ENCODE measurements at regions of chr22 and their contacts with region 1.

Region 1: GRCh38 chr22:50341977-50342650 is 1.0 kb upstream of the PPP6R2 start:
- DNase-seq: peak; percentile 78 to 92 (median 88)
- ATAC-seq: peak; percentile 49
- H3K4me3 ChIP-seq: peak overlapping the region; percentile 59 to 60
- H3K4me3 Mint-ChIP-seq: peak overlapping the region; percentile 84
- H3K27ac ChIP-seq: peak overlapping the region; percentile 62 to 77
- H3K27ac Mint-ChIP-seq: peak overlapping the region; percentile 92
- H3K4me1 ChIP-seq: peaks cover 23% of the 10 kb centered on the region
- H3K4me1 Mint-ChIP-seq: peaks cover 12% of the 10 kb centered on the region
- H3K27me3 ChIP-seq: peaks cover 0 to 8% of the 10 kb centered on the region in 2 experiments
- H3K27me3 Mint-ChIP-seq: no peaks in the 10 kb centered on the region
- CTCF ChIP-seq: peak; percentile 88

Region 2: DNA sequence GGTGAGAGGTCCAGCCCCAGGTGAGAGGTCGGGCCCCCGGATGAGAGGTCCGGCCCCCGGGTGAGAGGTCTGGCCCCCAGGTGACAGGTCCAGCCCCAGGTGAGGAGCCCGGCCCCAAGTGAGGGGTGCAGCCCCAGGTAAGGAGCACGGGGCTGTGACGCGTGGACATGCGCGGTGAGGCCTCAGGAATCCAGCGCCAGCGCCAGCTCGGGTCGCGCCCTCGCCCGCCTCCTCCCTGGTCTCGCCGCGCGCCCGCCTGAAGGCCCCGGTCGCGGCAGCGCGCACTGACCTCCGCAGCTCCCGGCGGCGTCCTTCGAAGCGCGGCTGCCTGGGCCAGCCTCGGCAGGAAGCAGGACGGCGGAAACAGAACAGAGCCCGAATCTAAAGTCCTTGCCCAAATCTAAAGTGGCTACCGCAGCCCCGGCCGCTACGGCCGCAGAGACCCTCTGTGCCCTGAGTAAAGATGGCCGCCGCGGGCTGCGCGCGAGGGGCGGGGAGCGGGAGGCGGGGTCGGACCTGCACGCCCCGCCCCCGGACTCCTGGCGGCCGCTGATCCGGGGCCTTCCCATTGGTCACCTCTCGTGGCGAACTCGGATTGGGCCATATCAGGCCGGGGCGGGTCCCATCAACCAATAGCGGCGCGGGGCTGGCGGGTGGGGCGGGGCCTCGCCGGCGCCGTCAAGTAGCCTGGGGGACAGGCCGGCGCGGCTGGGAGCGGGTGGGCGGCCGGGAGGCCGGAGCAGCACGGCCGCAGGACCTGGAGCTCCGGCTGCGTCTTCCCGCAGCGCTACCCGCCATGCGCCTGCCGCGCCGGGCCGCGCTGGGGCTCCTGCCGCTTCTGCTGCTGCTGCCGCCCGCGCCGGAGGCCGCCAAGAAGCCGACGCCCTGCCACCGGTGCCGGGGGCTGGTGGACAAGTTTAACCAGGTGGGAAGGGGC is 423.9 kb before region 1 on chr22 and contains the starts of genes ALG12 and CRELD2:
- CTCF ChIA-PET with region 1: no interaction called
- POLR2A ChIA-PET with region 1: no interaction called
- intact Hi-C with region 1: loop called in 1 of 2 experiments (anchors 2 kb)
- DNase-seq: peak; percentile 92 to 98 (median 96)
- ATAC-seq: peak; percentile 99
- H3K4me3 ChIP-seq: peak within 1 kb of the TSS; percentile 86 to 99
- H3K4me3 Mint-ChIP-seq: peak within 1 kb of the TSS; percentile 88
- H3K27ac ChIP-seq: peak within 1 kb of the TSS; percentile 72 to 83
- H3K27ac Mint-ChIP-seq: peak within 1 kb of the TSS; percentile 84
- H3K4me1 ChIP-seq: peaks cover 22% of the 10 kb centered on the region
- H3K4me1 Mint-ChIP-seq: peaks cover 28% of the 10 kb centered on the region
- H3K27me3 ChIP-seq: no peaks in the 10 kb centered on the region
- H3K27me3 Mint-ChIP-seq: no peaks in the 10 kb centered on the region
- CTCF ChIP-seq: no peak
- total RNA-seq, gene ALG12: 11.4 to 15.2 TPM
- total RNA-seq, gene CRELD2: 26.3 to 28.1 TPM

Region 3: GRCh38 chr22:50044485-50045118 is 297.5 kb before region 1 on chr22:
- CTCF ChIA-PET with region 1: no interaction called
- POLR2A ChIA-PET with region 1: no interaction called
- intact Hi-C with region 1: no loop called
- DNase-seq: no peak
- ATAC-seq: peak; percentile 34
- H3K4me3 ChIP-seq: no peak overlapping the region
- H3K4me3 Mint-ChIP-seq: no peak overlapping the region
- H3K27ac ChIP-seq: no peak overlapping the region
- H3K27ac Mint-ChIP-seq: no peak overlapping the region
- H3K4me1 ChIP-seq: peaks cover 7% of the 10 kb centered on the region
- H3K4me1 Mint-ChIP-seq: peaks cover 12% of the 10 kb centered on the region
- H3K27me3 ChIP-seq: peaks cover 0 to 2% of the 10 kb centered on the region in 2 experiments
- H3K27me3 Mint-ChIP-seq: peaks cover 20% of the 10 kb centered on the region
- CTCF ChIP-seq: no peak

Region 4: GRCh38 chr22:50200461-50201190 is 141.5 kb before region 1 on chr22 and contains the start of gene SELENOO:
- CTCF ChIA-PET with region 1: no interaction called
- POLR2A ChIA-PET with region 1: no interaction called
- intact Hi-C with region 1: loop called (anchors 2 to 5 kb)
- DNase-seq: peak; percentile 86 to 95 (median 91)
- ATAC-seq: peak; percentile 88
- H3K4me3 ChIP-seq: peak within 1 kb of the TSS; percentile 51 to 68
- H3K4me3 Mint-ChIP-seq: peak within 1 kb of the TSS; percentile 86
- H3K27ac ChIP-seq: peak within 1 kb of the TSS; percentile 60 to 77
- H3K27ac Mint-ChIP-seq: peak within 1 kb of the TSS; percentile 84
- H3K4me1 ChIP-seq: peaks cover 17% of the 10 kb centered on the region
- H3K4me1 Mint-ChIP-seq: peaks cover 24% of the 10 kb centered on the region
- H3K27me3 ChIP-seq: no peaks in the 10 kb centered on the region
- H3K27me3 Mint-ChIP-seq: no peaks in the 10 kb centered on the region
- CTCF ChIP-seq: no peak
- total RNA-seq, gene SELENOO: 32.7 to 34.6 TPM

Region 5: GRCh38 chr22:50250555-50251476 is 91.3 kb before region 1 on chr22 and contains the start of gene HDAC10:
- CTCF ChIA-PET with region 1: interaction called, 18 read pairs
- POLR2A ChIA-PET with region 1: no interaction called
- intact Hi-C with region 1: loop called (anchors 1 kb)
- DNase-seq: peak; percentile 38 to 90 (median 77)
- ATAC-seq: peak; percentile 72
- H3K4me3 ChIP-seq: peak within 1 kb of the TSS; percentile 77 to 89
- H3K4me3 Mint-ChIP-seq: peak within 1 kb of the TSS; percentile 81
- H3K27ac ChIP-seq: peak within 1 kb of the TSS; percentile 58 to 67
- H3K27ac Mint-ChIP-seq: no peak within 1 kb of the TSS
- H3K4me1 ChIP-seq: peaks cover 36% of the 10 kb centered on the region
- H3K4me1 Mint-ChIP-seq: peaks cover 22% of the 10 kb centered on the region
- H3K27me3 ChIP-seq: no peaks in the 10 kb centered on the region
- H3K27me3 Mint-ChIP-seq: no peaks in the 10 kb centered on the region
- CTCF ChIP-seq: no peak
- total RNA-seq, gene HDAC10: 81.8 to 82.6 TPM

Region 6: GRCh38 chr22:50276143-50276542 is 66.0 kb before region 1 on chr22:
- CTCF ChIA-PET with region 1: interaction called, 3 read pairs
- POLR2A ChIA-PET with region 1: no interaction called
- intact Hi-C with region 1: loop called (anchors 1 kb)
- DNase-seq: peak in 4 of 9 experiments; percentile 41 to 81 (median 70)
- ATAC-seq: peak; percentile 74
- H3K4me3 ChIP-seq: no peak overlapping the region
- H3K4me3 Mint-ChIP-seq: no peak overlapping the region
- H3K27ac ChIP-seq: no peak overlapping the region
- H3K27ac Mint-ChIP-seq: no peak overlapping the region
- H3K4me1 ChIP-seq: peaks cover 10% of the 10 kb centered on the region
- H3K4me1 Mint-ChIP-seq: peaks cover 3% of the 10 kb centered on the region
- H3K27me3 ChIP-seq: no peaks in the 10 kb centered on the region
- H3K27me3 Mint-ChIP-seq: peaks cover 3% of the 10 kb centered on the region
- CTCF ChIP-seq: peak; percentile 41

Region 7: DNA sequence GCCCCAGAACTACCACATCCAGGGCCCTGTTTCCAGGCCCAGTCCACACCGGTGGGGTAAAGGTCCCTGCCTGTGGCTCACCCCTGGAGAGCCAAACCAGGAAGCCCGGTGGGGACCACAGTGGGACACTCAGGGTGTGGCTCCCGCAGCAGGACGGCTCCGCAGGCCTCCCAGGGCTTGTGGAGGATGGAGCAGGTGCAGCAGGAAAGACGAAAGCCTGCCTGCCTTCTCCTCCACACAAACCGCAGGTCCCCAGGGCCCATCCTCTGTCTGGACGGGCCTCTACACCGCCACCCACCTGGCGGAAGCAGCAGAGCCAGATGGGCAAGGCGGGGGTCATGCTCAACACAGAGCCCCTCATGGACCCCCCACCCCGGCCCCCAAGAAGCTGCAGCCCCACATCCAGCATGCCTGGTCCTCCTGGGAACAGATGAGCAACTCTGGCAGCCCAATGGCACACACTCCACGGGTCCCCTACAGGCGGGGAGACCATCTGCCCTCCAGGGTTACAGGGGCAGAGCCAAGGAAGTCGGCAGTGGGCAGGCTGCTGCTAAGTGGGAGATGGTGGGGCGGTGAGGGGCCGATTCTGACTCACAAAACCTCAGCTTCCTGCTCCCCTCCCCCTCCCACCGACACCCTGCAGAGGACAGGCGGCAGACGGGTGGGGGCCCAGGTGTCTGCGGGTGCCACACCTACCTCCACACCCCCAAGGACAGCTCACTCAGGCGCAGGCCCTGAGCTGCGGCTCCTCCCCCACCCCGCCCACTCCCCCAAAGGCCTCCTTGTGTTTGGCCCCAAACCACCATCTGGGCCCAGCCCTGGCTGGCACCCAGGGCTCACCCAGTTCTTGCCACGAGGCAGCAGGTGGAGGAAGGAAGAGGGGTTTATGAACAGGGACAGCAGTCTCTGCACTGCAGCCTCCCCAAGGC is 127.5 kb after region 1 on chr22:
- CTCF ChIA-PET with region 1: no interaction called
- POLR2A ChIA-PET with region 1: no interaction called
- intact Hi-C with region 1: loop called (anchors 1 to 10 kb)
- DNase-seq: peak; percentile 94 to 100 (median 99)
- ATAC-seq: peak; percentile 85
- H3K4me3 ChIP-seq: peak overlapping the region; percentile 50 to 79
- H3K4me3 Mint-ChIP-seq: peak overlapping the region; percentile 75
- H3K27ac ChIP-seq: peak overlapping the region; percentile 81 to 82
- H3K27ac Mint-ChIP-seq: peak overlapping the region; percentile 96
- H3K4me1 ChIP-seq: peaks cover 79% of the 10 kb centered on the region
- H3K4me1 Mint-ChIP-seq: peaks cover 76% of the 10 kb centered on the region
- H3K27me3 ChIP-seq: no peaks in the 10 kb centered on the region
- H3K27me3 Mint-ChIP-seq: no peaks in the 10 kb centered on the region
- CTCF ChIP-seq: peak; percentile 23

Region 8: GRCh38 chr22:50507991-50508884 is 166.1 kb after region 1 on chr22 and contains the start of gene NCAPH2:
- CTCF ChIA-PET with region 1: interaction called, 3 read pairs
- POLR2A ChIA-PET with region 1: no interaction called
- intact Hi-C with region 1: loop called (anchors 1 to 10 kb)
- DNase-seq: peak in 8 of 9 experiments; percentile 94 to 99 (median 98)
- ATAC-seq: peak; percentile 74
- H3K4me3 ChIP-seq: peak within 1 kb of the TSS; percentile 88 to 97
- H3K4me3 Mint-ChIP-seq: peak within 1 kb of the TSS; percentile 96
- H3K27ac ChIP-seq: peak within 1 kb of the TSS; percentile 93
- H3K27ac Mint-ChIP-seq: peak within 1 kb of the TSS; percentile 99
- H3K4me1 ChIP-seq: peaks cover 23% of the 10 kb centered on the region
- H3K4me1 Mint-ChIP-seq: peaks cover 26% of the 10 kb centered on the region
- H3K27me3 ChIP-seq: no peaks in the 10 kb centered on the region
- H3K27me3 Mint-ChIP-seq: no peaks in the 10 kb centered on the region
- CTCF ChIP-seq: no peak
- total RNA-seq, gene NCAPH2: 206 to 209 TPM